Endothelial cell of umbilical vein (primary cell): ENCODE measurements at regions of chr4 and their contacts with region 1.

Region 1: GRCh38 chr4:102620697-102621497 is 119.7 kb downstream of the NFKB1 start:
- DNase-seq: peak; percentile 67
- H3K4me3 ChIP-seq: no peak overlapping the region
- H3K27ac ChIP-seq: no peak overlapping the region
- H3K4me1 ChIP-seq: peaks cover 1% of the 10 kb centered on the region
- H3K27me3 ChIP-seq: no peaks in the 10 kb centered on the region
- CTCF ChIP-seq: peak; percentile 34 to 36
- POLR2A ChIP-seq: no peak

Region 2: GRCh38 chr4:102430461-102430910 is 190.4 kb before region 1 on chr4:
- CTCF ChIA-PET with region 1: interaction called, 9 read pairs
- POLR2A ChIA-PET with region 1: no interaction called
- dilution Hi-C with region 1: no loop called
- intact Hi-C with region 1: loop called (anchors 1 kb)
- DNase-seq: peak; percentile 50
- H3K4me3 ChIP-seq: peak overlapping the region; percentile 49 to 97 (median 97)
- H3K27ac ChIP-seq: peak overlapping the region; percentile 84
- H3K4me1 ChIP-seq: peaks cover 4% of the 10 kb centered on the region
- H3K27me3 ChIP-seq: no peaks in the 10 kb centered on the region
- CTCF ChIP-seq: no peak
- POLR2A ChIP-seq: no peak

Region 3: DNA sequence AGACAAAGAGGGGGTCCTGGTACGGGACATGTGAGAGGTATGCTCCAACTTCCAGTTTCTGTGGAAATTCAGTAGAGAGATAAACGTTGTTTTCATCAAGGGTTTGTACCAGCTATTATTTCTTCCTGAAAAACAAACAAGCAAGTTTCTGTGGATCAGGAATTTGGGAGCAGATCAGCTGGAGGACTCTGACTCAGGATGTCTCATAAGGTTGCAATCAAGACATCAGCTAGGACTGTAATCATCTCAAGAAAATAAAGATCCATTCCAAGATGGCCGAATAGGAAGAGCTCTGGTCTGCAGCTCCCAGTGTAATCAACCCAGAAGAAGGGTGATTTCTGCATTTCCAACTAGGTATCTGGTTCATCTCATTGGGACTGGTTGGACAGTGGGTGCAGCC is 143.2 kb before region 1 on chr4:
- CTCF ChIA-PET with region 1: no interaction called
- POLR2A ChIA-PET with region 1: no interaction called
- dilution Hi-C with region 1: no loop called
- intact Hi-C with region 1: no loop called
- DNase-seq: no peak
- H3K4me3 ChIP-seq: no peak overlapping the region
- H3K27ac ChIP-seq: no peak overlapping the region
- H3K4me1 ChIP-seq: no peaks in the 10 kb centered on the region
- H3K27me3 ChIP-seq: peaks cover 0 to 9% of the 10 kb centered on the region in 2 experiments
- CTCF ChIP-seq: no peak
- POLR2A ChIP-seq: no peak

Region 4: DNA sequence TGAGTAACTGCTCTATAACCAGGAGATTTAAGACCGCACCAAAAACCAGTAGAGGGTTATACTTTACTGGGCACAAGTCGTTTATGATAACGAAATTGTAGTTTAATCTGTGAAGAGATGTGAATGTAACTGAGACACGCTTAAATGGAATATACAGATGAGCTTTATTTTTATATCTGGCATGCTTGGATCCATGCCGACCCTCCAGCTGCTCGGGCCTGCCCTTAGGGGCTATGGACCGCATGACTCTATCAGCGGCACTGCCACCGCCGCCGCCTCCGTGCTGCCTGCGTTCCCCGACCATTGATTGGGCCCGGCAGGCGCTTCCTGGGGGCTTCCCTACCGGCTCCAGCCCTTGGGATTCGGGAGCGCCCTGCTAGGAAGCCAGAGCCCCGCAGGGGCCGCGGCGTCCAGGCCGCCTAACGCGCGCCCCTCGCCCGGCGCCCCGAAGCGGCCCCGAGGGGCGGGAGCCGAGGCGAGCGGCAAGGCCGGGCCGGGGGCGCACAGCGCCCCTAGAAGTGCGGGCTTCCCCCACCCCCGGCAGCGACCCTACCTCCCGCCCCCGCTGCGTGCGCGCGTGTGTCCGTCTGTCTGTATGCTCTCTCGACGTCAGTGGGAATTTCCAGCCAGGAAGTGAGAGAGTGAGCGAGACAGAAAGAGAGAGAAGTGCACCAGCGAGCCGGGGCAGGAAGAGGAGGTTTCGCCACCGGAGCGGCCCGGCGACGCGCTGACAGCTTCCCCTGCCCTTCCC is 120.0 kb before region 1 on chr4 and contains the start of gene NFKB1:
- CTCF ChIA-PET with region 1: interaction called, 4 read pairs
- POLR2A ChIA-PET with region 1: no interaction called
- dilution Hi-C with region 1: no loop called
- intact Hi-C with region 1: loop called (anchors 5 kb)
- DNase-seq: peak; percentile 81
- H3K4me3 ChIP-seq: peak within 1 kb of the TSS; percentile 83 to 93 (median 88)
- H3K27ac ChIP-seq: peak within 1 kb of the TSS; percentile 90
- H3K4me1 ChIP-seq: peaks cover 22% of the 10 kb centered on the region
- H3K27me3 ChIP-seq: no peaks in the 10 kb centered on the region
- CTCF ChIP-seq: no peak
- POLR2A ChIP-seq: peak; percentile 54
- total RNA-seq, gene NFKB1: 41.4 and 42.0 TPM in 2 replicates

Region 5: DNA sequence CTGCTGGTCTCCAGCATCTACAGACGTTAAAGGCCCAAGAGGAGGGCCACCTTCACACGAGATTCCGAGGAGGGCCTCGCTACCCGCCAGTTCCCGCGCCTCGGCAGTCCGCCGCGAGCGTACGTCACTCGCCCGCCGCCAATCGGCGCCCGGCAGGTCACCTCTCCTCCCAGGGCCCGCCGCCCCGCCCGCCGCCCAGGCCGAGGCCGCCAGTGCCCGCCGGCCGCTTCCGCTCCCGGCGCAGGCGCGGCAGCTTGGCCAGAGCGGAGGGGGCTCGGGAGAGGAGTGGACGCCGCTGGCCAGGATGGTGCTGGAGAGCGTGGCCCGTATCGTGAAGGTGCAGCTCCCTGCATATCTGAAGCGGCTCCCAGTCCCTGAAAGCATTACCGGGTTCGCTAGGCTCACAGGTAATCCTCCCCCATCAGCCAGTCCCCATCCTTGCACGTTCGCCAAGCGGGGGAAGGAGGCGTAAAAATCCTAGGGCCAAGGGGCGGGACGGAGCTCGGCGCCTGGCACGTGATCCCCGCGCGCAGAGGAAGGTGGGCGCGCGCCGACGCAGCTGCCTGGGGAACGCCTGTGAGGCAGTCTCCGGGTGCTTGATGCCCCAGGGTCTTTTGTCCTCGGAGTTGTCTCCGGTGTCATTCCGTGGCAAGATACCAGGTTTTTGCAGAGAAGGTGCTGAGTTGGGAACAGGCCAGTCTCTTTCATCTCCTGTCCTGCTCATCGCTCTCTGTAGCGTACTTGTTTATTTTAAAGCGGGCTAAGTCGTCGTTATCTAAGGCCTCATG is 248.1 kb after region 1 on chr4 and contains the start of gene CISD2:
- CTCF ChIA-PET with region 1: interaction called, 13 read pairs
- POLR2A ChIA-PET with region 1: interaction called, 3 read pairs
- dilution Hi-C with region 1: no loop called
- intact Hi-C with region 1: loop called (anchors 5 kb)
- DNase-seq: peak; percentile 94
- H3K4me3 ChIP-seq: peak within 1 kb of the TSS; percentile 43 to 88 (median 78)
- H3K27ac ChIP-seq: peak within 1 kb of the TSS; percentile 76
- H3K4me1 ChIP-seq: peaks cover 25% of the 10 kb centered on the region
- H3K27me3 ChIP-seq: no peaks in the 10 kb centered on the region
- CTCF ChIP-seq: no peak
- POLR2A ChIP-seq: peak; percentile 91
- total RNA-seq, gene CISD2: 26.5 and 28.4 TPM in 2 replicates

Region 6: DNA sequence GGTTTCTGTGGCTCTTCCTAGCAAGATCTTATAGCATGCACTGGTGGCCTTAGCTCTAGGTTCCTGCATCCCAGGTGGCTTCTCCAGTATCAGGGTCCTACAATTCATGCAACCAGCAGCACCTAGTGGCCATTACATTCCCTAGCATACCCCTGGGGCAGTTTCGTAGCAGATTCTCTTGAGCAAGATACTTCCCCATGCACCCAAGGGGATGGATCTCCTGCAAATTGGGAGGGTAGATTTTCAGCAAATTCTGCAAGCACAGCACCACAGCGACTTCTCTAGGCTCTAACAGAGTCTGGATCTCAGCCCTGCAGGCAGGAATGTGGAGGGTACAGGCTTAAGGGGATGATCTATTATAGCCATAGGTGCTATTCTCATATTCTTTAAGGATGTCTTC is 411.7 kb after region 1 on chr4:
- CTCF ChIA-PET with region 1: interaction called, 20 read pairs
- POLR2A ChIA-PET with region 1: no interaction called
- dilution Hi-C with region 1: no loop called
- intact Hi-C with region 1: no loop called
- DNase-seq: peak; percentile 6
- H3K4me3 ChIP-seq: no peak overlapping the region
- H3K27ac ChIP-seq: no peak overlapping the region
- H3K4me1 ChIP-seq: no peaks in the 10 kb centered on the region
- H3K27me3 ChIP-seq: no peaks in the 10 kb centered on the region
- CTCF ChIP-seq: peak; percentile 39 to 55
- POLR2A ChIP-seq: no peak

Region 7: GRCh38 chr4:103050736-103051436 is 430.0 kb after region 1 on chr4:
- CTCF ChIA-PET with region 1: no interaction called
- POLR2A ChIA-PET with region 1: no interaction called
- dilution Hi-C with region 1: no loop called
- intact Hi-C with region 1: no loop called
- DNase-seq: no peak
- H3K4me3 ChIP-seq: no peak overlapping the region
- H3K27ac ChIP-seq: no peak overlapping the region
- H3K4me1 ChIP-seq: no peaks in the 10 kb centered on the region
- H3K27me3 ChIP-seq: no peaks in the 10 kb centered on the region
- CTCF ChIP-seq: no peak
- POLR2A ChIP-seq: no peak

Region 8: GRCh38 chr4:103099691-103100392 is 478.9 kb after region 1 on chr4 and contains the start of gene BDH2:
- CTCF ChIA-PET with region 1: interaction called, 32 read pairs
- POLR2A ChIA-PET with region 1: no interaction called
- dilution Hi-C with region 1: no loop called
- intact Hi-C with region 1: loop called (anchors 1 kb)
- DNase-seq: peak; percentile 93
- H3K4me3 ChIP-seq: peak within 1 kb of the TSS; percentile 21 to 82 (median 48)
- H3K27ac ChIP-seq: peak within 1 kb of the TSS; percentile 49
- H3K4me1 ChIP-seq: peaks cover 8% of the 10 kb centered on the region
- H3K27me3 ChIP-seq: no peaks in the 10 kb centered on the region
- CTCF ChIP-seq: peak; percentile 53 to 59
- POLR2A ChIP-seq: no peak
- total RNA-seq, gene BDH2: 29.4 and 36.4 TPM in 2 replicates

Region 9: DNA sequence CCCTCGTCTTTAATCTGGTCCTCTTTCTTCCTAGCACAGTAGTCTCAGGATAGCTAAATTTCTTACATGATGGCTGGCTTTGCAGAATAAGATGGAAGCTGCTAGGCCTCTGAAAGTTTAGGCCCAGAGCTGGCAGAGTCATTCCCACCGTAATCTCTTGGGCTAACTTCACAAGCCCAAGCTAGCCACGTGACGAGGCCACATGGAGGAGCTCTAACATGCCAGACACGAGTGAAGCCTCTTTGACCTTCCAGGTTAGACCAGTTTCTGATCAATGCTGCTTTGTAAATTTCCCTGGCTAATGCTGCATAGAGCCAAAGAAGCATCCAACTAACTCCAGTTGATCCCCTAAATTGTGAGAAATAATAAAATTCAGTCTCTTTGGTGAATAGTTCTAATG is 586.8 kb after region 1 on chr4:
- CTCF ChIA-PET with region 1: no interaction called
- POLR2A ChIA-PET with region 1: no interaction called
- dilution Hi-C with region 1: no loop called
- intact Hi-C with region 1: no loop called
- DNase-seq: no peak
- H3K4me3 ChIP-seq: no peak overlapping the region
- H3K27ac ChIP-seq: no peak overlapping the region
- H3K4me1 ChIP-seq: no peaks in the 10 kb centered on the region
- H3K27me3 ChIP-seq: peaks cover 0 to 2% of the 10 kb centered on the region in 2 experiments
- CTCF ChIP-seq: no peak
- POLR2A ChIP-seq: no peak